IMR-90 (cell line): ENCODE measurements at regions of chr3 and their contacts with region 1.

Region 1: GRCh38 chr3:188954590-188955208 is 217.1 kb upstream of the TPRG1 start:
- DNase-seq: peak; percentile 88
- ATAC-seq: peak; percentile 49
- H3K4me3 ChIP-seq: no peak overlapping the region
- H3K27ac ChIP-seq: no peak overlapping the region
- H3K4me1 ChIP-seq: peaks cover 10% of the 10 kb centered on the region
- H3K27me3 ChIP-seq: no peaks in the 10 kb centered on the region
- CTCF ChIP-seq: peak; percentile 97
- POLR2A ChIP-seq: peak; percentile 59; the same call in 1 of the 2 replicates
- RAD21 ChIP-seq: peak; percentile 100

Region 2: GRCh38 chr3:187738331-187739093 is 1216.2 kb before region 1 on chr3:
- CTCF ChIA-PET with region 1: interaction called, 96 read pairs
- POLR2A ChIA-PET with region 1: no interaction called
- dilution Hi-C with region 1: loop called (anchors 10 kb)
- in situ Hi-C with region 1: loop called (anchors 5 kb)
- intact Hi-C with region 1: loop called (anchors 1 kb)
- DNase-seq: peak; percentile 93
- ATAC-seq: peak; percentile 63
- H3K4me3 ChIP-seq: peak overlapping the region; percentile 46
- H3K27ac ChIP-seq: peak overlapping the region; percentile 87
- H3K4me1 ChIP-seq: peaks cover 20% of the 10 kb centered on the region
- H3K27me3 ChIP-seq: no peaks in the 10 kb centered on the region
- CTCF ChIP-seq: peak; percentile 77
- POLR2A ChIP-seq: peak; percentile 48; the same call in 1 of the 2 replicates
- RAD21 ChIP-seq: peak; percentile 91

Region 3: DNA sequence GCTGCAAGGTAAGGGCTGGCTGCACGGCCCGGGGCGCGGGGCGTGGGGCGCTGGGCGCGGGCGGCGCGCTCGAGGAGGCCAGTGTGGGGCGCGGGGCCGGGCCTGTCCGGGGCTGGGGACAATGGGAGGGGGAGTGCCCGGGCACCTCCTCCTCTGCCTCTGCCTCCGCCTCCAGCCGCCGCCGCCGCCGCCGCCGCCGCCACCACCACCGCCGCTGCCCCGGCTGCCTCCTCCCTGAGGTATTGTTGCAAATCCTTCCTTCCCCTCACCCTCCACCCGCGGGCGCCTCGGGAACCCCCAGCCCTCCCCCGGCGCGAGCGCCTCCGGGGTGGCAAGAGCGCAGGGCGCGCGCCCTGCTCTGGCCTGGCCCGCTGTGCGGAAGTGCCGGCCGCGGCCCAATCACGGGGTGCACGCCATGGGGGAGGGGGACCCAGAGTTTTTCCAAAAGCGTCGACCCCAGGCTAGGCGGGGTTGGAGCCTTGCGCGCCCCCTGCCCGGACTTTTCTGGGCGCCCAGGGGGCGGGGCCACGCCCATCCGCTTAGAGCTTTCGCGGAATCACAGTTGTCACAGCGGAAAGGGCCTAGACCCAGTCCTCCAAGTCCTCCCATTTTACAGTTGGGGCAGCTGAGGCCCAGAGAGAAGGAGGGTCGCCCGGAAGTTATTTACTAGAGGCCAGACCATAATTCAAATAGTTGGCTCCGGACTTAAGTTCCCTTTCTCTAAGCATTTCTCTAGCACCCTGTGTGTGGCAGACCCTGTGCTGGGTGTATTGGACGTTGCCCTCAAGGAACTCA is 800.5 kb before region 1 on chr3 and contains the start of gene LPP:
- CTCF ChIA-PET with region 1: no interaction called
- POLR2A ChIA-PET with region 1: no interaction called
- dilution Hi-C with region 1: no loop called
- in situ Hi-C with region 1: no loop called
- intact Hi-C with region 1: loop called (anchors 2 kb)
- DNase-seq: peak; percentile 77
- ATAC-seq: peak; percentile 86
- H3K4me3 ChIP-seq: peak within 1 kb of the TSS; percentile 83
- H3K27ac ChIP-seq: peak within 1 kb of the TSS; percentile 97
- H3K4me1 ChIP-seq: peaks cover 30% of the 10 kb centered on the region
- H3K27me3 ChIP-seq: no peaks in the 10 kb centered on the region
- CTCF ChIP-seq: 0 out of 2 replicates have a peak, but pooled peaks have one; percentile 4
- POLR2A ChIP-seq: no peak; the same call in 1 of the 2 replicates
- RAD21 ChIP-seq: peak; percentile 24; the same call in 1 of the 2 replicates
- total RNA-seq, gene LPP: 111 and 130 TPM in 2 replicates

Region 4: GRCh38 chr3:188348435-188349244 is 606.1 kb before region 1 on chr3:
- CTCF ChIA-PET with region 1: interaction called, 4 read pairs
- POLR2A ChIA-PET with region 1: no interaction called
- dilution Hi-C with region 1: no loop called
- in situ Hi-C with region 1: no loop called
- intact Hi-C with region 1: loop called (anchors 10 kb)
- DNase-seq: peak; percentile 85
- ATAC-seq: peak; percentile 74
- H3K4me3 ChIP-seq: no peak overlapping the region
- H3K27ac ChIP-seq: peak overlapping the region; percentile 45; the same call in 1 of the 2 replicates
- H3K4me1 ChIP-seq: peaks cover 18% of the 10 kb centered on the region
- H3K27me3 ChIP-seq: no peaks in the 10 kb centered on the region
- CTCF ChIP-seq: no peak
- POLR2A ChIP-seq: no peak
- RAD21 ChIP-seq: no peak

Region 5: DNA sequence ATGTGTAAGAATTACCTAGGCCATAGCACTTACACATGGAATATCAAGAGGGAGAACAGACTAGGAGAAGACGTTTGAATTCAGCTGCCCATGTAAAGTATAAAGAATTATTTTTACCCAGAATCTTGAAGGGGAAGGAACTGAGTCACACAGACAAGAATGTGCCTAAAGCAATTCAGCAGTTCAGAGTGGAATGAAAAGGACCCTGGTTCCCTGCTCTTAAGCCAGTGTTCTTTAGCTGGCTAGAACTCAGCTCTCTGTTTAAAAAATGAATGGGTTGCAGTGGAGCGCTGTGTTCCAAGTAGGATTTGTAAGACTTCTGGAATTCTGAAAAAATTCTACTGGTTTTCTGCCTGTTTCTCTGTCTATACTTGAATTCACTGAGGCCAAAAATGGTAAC is 360.6 kb before region 1 on chr3:
- CTCF ChIA-PET with region 1: no interaction called
- POLR2A ChIA-PET with region 1: no interaction called
- dilution Hi-C with region 1: no loop called
- in situ Hi-C with region 1: no loop called
- intact Hi-C with region 1: loop called (anchors 5 kb)
- DNase-seq: peak; percentile 95
- ATAC-seq: peak; percentile 89
- H3K4me3 ChIP-seq: no peak overlapping the region
- H3K27ac ChIP-seq: peak overlapping the region; percentile 45
- H3K4me1 ChIP-seq: peaks cover 9% of the 10 kb centered on the region
- H3K27me3 ChIP-seq: no peaks in the 10 kb centered on the region
- CTCF ChIP-seq: no peak
- POLR2A ChIP-seq: no peak
- RAD21 ChIP-seq: no peak

Region 6: GRCh38 chr3:188881954-188882641 is 72.6 kb before region 1 on chr3:
- CTCF ChIA-PET with region 1: no interaction called
- POLR2A ChIA-PET with region 1: no interaction called
- dilution Hi-C with region 1: no loop called
- in situ Hi-C with region 1: no loop called
- intact Hi-C with region 1: loop called (anchors 5 kb)
- DNase-seq: peak; percentile 95
- ATAC-seq: peak; percentile 88
- H3K4me3 ChIP-seq: no peak overlapping the region
- H3K27ac ChIP-seq: peak overlapping the region; percentile 52
- H3K4me1 ChIP-seq: peaks cover 3% of the 10 kb centered on the region; the same call in 1 of the 2 replicates
- H3K27me3 ChIP-seq: no peaks in the 10 kb centered on the region
- CTCF ChIP-seq: no peak
- POLR2A ChIP-seq: no peak
- RAD21 ChIP-seq: no peak

Region 7: DNA sequence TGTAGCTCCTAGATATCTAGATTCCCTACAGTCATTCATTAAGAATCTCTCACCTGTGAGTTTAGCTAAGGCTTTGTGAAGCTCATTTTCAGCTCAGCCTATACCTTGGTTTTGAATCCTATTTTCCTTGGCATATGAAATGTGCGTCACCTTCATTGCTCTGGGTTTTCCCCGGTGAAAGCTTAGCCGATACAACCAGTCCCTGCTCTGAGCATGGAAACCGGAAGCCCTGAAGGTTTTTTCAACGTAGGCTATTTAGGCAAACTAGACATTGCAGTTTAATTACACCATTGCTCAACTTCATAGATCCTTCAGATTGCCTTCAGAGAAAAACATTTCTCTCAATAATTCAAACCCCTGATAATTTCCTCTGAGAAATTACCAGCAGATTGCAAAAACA is 10.3 kb after region 1 on chr3:
- CTCF ChIA-PET with region 1: no interaction called
- POLR2A ChIA-PET with region 1: no interaction called
- dilution Hi-C with region 1: no loop called
- in situ Hi-C with region 1: no loop called
- intact Hi-C with region 1: no loop called
- DNase-seq: no peak
- ATAC-seq: no peak
- H3K4me3 ChIP-seq: no peak overlapping the region
- H3K27ac ChIP-seq: no peak overlapping the region
- H3K4me1 ChIP-seq: no peaks in the 10 kb centered on the region
- H3K27me3 ChIP-seq: no peaks in the 10 kb centered on the region
- CTCF ChIP-seq: no peak
- POLR2A ChIP-seq: no peak
- RAD21 ChIP-seq: no peak

Region 8: DNA sequence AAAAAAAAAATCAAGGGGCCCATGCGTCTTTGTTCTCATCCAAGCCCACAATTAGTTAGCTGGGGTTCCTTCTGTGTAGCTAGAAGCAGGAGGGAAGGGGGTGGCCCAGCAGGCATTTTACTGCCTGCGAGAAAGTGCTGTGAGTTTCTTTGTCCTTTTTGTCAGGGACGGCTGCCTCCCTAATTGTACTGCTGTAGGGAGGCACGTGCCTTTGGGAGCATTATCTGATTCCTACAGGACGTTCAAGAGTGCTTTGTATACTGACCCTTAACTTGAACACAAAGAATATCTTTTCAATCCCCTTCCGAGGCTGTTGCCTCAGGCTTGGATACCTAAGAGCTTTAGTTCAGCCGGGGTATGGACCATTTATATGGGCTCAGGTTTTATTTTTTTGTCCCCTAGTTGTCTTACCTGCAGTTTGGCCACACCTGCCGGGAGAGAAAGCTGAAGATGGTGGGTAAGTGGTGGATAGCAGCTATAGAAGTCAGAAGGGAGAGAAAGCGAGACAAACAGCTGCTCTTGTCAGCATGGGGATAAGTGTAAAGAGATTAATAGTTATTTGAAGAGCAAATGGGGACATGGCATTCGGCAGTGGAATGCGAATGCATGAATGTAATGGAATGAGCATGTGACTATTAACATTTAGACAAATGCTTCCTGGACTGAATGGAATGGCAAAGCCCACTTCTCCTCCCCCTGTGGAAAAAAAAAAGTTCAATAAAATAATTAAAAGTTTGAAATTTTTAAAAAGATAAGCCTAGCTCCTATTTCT is 851.7 kb after region 1 on chr3:
- CTCF ChIA-PET with region 1: no interaction called
- POLR2A ChIA-PET with region 1: no interaction called
- dilution Hi-C with region 1: no loop called
- in situ Hi-C with region 1: no loop called
- intact Hi-C with region 1: no loop called
- DNase-seq: peak; percentile 6
- ATAC-seq: peak; percentile 51
- H3K4me3 ChIP-seq: no peak overlapping the region
- H3K27ac ChIP-seq: no peak overlapping the region
- H3K4me1 ChIP-seq: peaks cover 2% of the 10 kb centered on the region; the same call in 1 of the 2 replicates
- H3K27me3 ChIP-seq: no peaks in the 10 kb centered on the region; the same call in 1 of the 2 replicates
- CTCF ChIP-seq: no peak
- POLR2A ChIP-seq: no peak
- RAD21 ChIP-seq: no peak